Activated naive CD4-positive, alpha-beta T cell treated with anti-CD3 and anti-CD28 coated beads, Interleukin-2, amount 10 ng/mL, durations not matched to agents 7 days and 5 days (primary cell): ENCODE measurements at regions of chr10 and their contacts with region 1.

Region 1: GRCh38 chr10:114470956-114471905 is 66.9 kb upstream of the AFAP1L2 start:
- DNase-seq: peak; percentile 74
- H3K4me3 Mint-ChIP-seq: no peak overlapping the region
- H3K27ac Mint-ChIP-seq: peak overlapping the region; percentile 0
- H3K4me1 Mint-ChIP-seq: peaks cover 33% of the 10 kb centered on the region
- H3K27me3 Mint-ChIP-seq: no peaks in the 10 kb centered on the region

Region 2: GRCh38 chr10:114279898-114280644 is 191.2 kb before region 1 on chr10:
- CTCF ChIA-PET with region 1: no interaction called
- DNase-seq: peak; percentile 9
- H3K4me3 Mint-ChIP-seq: no peak overlapping the region
- H3K27ac Mint-ChIP-seq: no peak overlapping the region
- H3K4me1 Mint-ChIP-seq: no peaks in the 10 kb centered on the region
- H3K27me3 Mint-ChIP-seq: peaks cover 8% of the 10 kb centered on the region

Region 3: DNA sequence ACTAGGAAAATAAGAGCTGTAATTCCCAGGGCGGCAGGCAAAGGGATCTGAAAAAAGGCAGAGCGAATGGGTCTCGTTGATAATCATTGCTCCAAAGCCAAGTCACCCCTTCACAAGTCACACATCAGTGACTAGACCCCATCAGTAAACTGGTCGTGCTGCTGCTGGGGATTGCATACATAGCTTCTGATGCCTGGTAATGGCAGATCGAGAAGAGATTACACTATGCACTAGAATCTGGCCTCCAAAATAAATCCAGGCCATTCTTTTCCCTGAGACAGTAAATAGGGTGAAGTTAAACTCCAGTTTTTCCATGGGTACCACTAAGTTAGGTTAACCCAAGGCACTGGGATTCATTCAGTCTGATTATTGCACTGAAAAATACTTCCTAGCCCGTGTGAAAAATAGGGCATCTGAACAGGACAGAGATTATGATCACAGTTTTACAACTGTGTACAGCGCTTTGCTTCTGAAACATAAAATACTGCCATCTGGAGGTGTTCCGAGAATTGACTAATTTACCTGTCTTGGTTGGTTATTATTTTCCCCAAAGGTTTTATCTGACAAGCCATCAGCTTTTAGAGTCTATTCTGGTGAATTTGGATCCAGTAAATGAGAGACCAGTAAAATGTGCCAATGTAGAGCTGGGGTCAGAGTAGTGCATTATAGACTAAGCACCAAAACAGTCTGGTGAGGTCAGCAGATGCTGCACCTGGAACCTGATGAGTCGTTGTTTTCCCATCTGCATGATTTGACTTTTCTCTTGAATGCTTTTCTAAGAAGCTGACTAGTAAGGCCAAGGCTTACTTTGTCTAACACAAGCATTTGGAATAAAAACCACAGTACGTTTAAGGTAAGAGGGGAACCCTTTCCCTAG is 15.9 kb after region 1 on chr10:
- CTCF ChIA-PET with region 1: interaction called, 62 read pairs
- DNase-seq: no peak
- H3K4me3 Mint-ChIP-seq: no peak overlapping the region
- H3K27ac Mint-ChIP-seq: no peak overlapping the region
- H3K4me1 Mint-ChIP-seq: peaks cover 36% of the 10 kb centered on the region
- H3K27me3 Mint-ChIP-seq: no peaks in the 10 kb centered on the region

Region 4: GRCh38 chr10:114519284-114519624 is 48.0 kb after region 1 on chr10:
- CTCF ChIA-PET with region 1: interaction called, 59 read pairs
- DNase-seq: no peak
- H3K4me3 Mint-ChIP-seq: no peak overlapping the region
- H3K27ac Mint-ChIP-seq: peak overlapping the region; percentile 43
- H3K4me1 Mint-ChIP-seq: peaks cover 99% of the 10 kb centered on the region
- H3K27me3 Mint-ChIP-seq: no peaks in the 10 kb centered on the region

Region 5: GRCh38 chr10:114550756-114551635 is 79.8 kb after region 1 on chr10:
- CTCF ChIA-PET with region 1: interaction called, 244 read pairs
- DNase-seq: no peak
- H3K4me3 Mint-ChIP-seq: no peak overlapping the region
- H3K27ac Mint-ChIP-seq: no peak overlapping the region
- H3K4me1 Mint-ChIP-seq: peaks cover 34% of the 10 kb centered on the region
- H3K27me3 Mint-ChIP-seq: peaks cover 10% of the 10 kb centered on the region

Region 6: GRCh38 chr10:114703377-114704107 is 232.3 kb after region 1 on chr10:
- CTCF ChIA-PET with region 1: interaction called, 11 read pairs
- DNase-seq: peak; percentile 27
- H3K4me3 Mint-ChIP-seq: no peak overlapping the region
- H3K27ac Mint-ChIP-seq: no peak overlapping the region
- H3K4me1 Mint-ChIP-seq: no peaks in the 10 kb centered on the region
- H3K27me3 Mint-ChIP-seq: peaks cover 18% of the 10 kb centered on the region